Activated CD8-positive, alpha-beta T cell treated with anti-CD3 and anti-CD28 coated beads for 36 hours (primary cell): ENCODE measurements at regions of chr1 and their contacts with region 1.

Region 1: DNA sequence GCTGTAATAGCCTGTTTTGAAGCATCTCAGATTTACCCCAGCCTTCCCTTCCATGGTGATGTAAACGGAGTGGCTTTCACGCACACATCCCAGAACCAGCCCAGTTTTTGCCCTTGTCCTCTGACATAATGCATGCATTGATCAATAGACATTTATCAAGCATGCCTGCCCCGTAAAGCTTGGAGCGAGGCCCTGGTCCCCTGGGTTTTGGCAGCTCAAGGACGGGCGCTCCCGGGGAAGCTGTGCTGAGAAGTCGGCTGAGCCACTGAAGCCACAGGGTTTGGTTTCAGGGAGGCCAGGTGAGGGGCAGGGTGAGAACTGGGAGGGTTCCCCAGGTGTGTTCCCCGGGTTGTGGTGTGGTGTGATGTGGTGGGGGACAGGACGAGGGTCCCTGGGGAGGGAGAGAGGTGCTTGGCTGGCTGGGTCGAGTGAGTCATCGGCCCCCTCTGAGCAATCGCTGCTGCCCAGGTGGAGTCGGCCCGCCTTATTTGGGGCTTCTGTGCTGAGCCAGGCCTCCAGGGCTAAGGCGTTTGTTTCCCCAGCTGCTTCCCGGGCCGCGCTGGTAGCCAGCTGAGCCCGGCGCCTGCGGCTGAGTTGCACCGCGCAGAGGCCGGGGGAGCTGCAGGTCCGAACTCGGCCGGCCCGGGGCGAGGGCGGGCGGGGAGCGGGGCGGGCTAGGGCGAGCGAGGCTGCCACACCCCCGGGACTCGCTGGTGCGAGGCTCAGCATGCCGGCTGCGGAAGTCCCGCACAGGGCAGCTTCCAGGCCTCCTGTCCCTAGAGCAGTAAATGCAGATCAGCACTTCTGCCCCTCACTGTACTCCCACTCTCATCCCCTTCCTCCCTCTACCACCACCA is 23.6 kb downstream of the ATP2B4 start:
- DNase-seq: peak; percentile 87
- ATAC-seq: peak; percentile 66
- H3K4me3 Mint-ChIP-seq: peak overlapping the region; percentile 63
- H3K27ac Mint-ChIP-seq: peak overlapping the region; percentile 94
- H3K4me1 Mint-ChIP-seq: peaks cover 68% of the 10 kb centered on the region
- H3K27me3 Mint-ChIP-seq: no peaks in the 10 kb centered on the region
- CTCF ChIP-seq: no peak

Region 2: GRCh38 chr1:203625628-203626019 is 24.6 kb before region 1 on chr1:
- CTCF ChIA-PET with region 1: interaction called, 25 read pairs
- POLR2A ChIA-PET with region 1: interaction called, 19 read pairs
- intact Hi-C with region 1: loop called (anchors 2 kb)
- DNase-seq: peak; percentile 75
- ATAC-seq: peak; percentile 47
- H3K4me3 Mint-ChIP-seq: peak overlapping the region; percentile 90
- H3K27ac Mint-ChIP-seq: peak overlapping the region; percentile 73
- H3K4me1 Mint-ChIP-seq: peaks cover 58% of the 10 kb centered on the region
- H3K27me3 Mint-ChIP-seq: no peaks in the 10 kb centered on the region
- CTCF ChIP-seq: peak; percentile 37

Region 3: DNA sequence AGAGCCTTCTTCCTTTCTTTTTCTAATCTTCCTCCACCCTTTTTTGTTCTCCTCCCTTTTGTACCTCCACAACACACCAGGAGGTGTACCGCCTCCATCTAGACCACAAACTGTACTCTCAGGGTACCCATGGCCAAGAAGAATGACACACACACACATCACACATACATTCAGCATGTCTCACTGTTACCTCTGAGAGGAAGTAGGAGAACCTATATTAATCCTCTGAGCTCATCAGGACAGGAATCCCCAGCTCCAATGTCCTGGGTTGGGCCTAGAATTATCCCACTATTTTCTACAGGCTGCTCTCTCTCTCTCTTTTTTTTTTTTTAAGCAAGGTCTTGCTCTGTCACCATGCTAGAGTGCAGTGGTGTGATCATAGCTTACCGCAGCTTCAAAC is 13.1 kb after region 1 on chr1:
- CTCF ChIA-PET with region 1: interaction called, 9 read pairs
- POLR2A ChIA-PET with region 1: interaction called, 15 read pairs
- intact Hi-C with region 1: no loop called
- DNase-seq: peak; percentile 66
- ATAC-seq: peak; percentile 84
- H3K4me3 Mint-ChIP-seq: no peak overlapping the region
- H3K27ac Mint-ChIP-seq: peak overlapping the region; percentile 27
- H3K4me1 Mint-ChIP-seq: peaks cover 52% of the 10 kb centered on the region
- H3K27me3 Mint-ChIP-seq: no peaks in the 10 kb centered on the region
- CTCF ChIP-seq: no peak

Region 4: DNA sequence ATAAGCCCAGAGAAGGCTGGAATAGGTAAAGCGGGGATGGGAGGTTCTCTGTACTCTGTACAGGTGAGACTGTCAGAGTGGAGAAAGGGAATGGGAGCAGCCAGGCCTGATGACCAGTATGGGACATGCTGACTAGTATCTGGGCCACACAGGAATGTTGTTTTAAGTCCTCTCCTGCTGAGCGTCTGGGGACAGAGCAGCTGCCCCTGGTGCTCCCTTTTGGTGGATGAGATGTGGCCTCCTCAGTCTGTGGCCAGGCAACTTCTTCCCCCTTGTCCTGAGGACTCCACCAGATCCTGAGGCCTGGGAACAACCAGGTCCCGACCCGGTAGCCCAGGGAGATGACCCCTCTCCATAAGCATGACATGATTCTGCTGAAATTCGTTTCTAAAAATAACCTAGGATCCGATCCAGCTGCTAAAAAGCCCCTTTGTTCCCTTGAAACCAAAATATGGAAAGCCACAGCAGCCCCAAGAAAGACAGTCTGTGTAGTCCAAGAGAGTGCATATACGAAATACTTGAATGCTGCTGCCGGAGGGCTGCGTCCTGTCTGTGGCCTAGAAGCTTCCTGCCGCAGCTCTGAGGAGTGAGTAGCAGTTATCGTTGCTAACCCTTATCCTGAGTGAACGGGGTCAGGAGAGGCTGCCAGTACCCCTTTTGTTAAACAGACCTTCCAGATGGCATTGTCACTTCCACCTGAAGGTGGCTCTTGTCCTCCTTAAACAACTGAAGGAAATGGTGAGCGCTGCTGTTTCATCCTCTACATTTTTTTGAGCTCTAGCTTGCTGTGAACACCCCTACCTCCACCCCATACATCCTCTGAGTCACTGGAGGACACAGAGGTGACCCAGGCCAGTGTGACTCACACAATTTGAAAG is 23.6 kb after region 1 on chr1:
- CTCF ChIA-PET with region 1: interaction called, 21 read pairs
- POLR2A ChIA-PET with region 1: interaction called, 10 read pairs
- intact Hi-C with region 1: loop called (anchors 1 kb)
- DNase-seq: peak; percentile 84
- ATAC-seq: peak; percentile 95
- H3K4me3 Mint-ChIP-seq: peak overlapping the region; percentile 50
- H3K27ac Mint-ChIP-seq: peak overlapping the region; percentile 93
- H3K4me1 Mint-ChIP-seq: peaks cover 50% of the 10 kb centered on the region
- H3K27me3 Mint-ChIP-seq: no peaks in the 10 kb centered on the region
- CTCF ChIP-seq: peak; percentile 43

Region 5: GRCh38 chr1:203682473-203683383 is 32.5 kb after region 1 on chr1:
- CTCF ChIA-PET with region 1: interaction called, 8 read pairs
- POLR2A ChIA-PET with region 1: interaction called, 10 read pairs
- intact Hi-C with region 1: no loop called
- DNase-seq: peak; percentile 76
- ATAC-seq: peak; percentile 92
- H3K4me3 Mint-ChIP-seq: peak overlapping the region; percentile 47
- H3K27ac Mint-ChIP-seq: peak overlapping the region; percentile 81
- H3K4me1 Mint-ChIP-seq: peaks cover 31% of the 10 kb centered on the region
- H3K27me3 Mint-ChIP-seq: no peaks in the 10 kb centered on the region
- CTCF ChIP-seq: no peak